A549 (cell line): ENCODE measurements at regions of chr1 and their contacts with region 1.

Region 1: GRCh38 chr1:39973503-39974135 is 18.7 kb downstream of the MFSD2A start:
- DNase-seq: peak; percentile 54 to 59
- ATAC-seq: peak; percentile 82 to 93
- H3K4me3 ChIP-seq: no peak overlapping the region
- H3K27ac ChIP-seq: no peak overlapping the region
- H3K4me1 ChIP-seq: peaks cover 5% of the 10 kb centered on the region; the same call in 1 of the 3 replicates
- CTCF ChIP-seq: peak; percentile 82
- EP300 ChIP-seq: no peak
- POLR2A ChIP-seq: no peak
- RAD21 ChIP-seq: peak; percentile 93

Region 2: DNA sequence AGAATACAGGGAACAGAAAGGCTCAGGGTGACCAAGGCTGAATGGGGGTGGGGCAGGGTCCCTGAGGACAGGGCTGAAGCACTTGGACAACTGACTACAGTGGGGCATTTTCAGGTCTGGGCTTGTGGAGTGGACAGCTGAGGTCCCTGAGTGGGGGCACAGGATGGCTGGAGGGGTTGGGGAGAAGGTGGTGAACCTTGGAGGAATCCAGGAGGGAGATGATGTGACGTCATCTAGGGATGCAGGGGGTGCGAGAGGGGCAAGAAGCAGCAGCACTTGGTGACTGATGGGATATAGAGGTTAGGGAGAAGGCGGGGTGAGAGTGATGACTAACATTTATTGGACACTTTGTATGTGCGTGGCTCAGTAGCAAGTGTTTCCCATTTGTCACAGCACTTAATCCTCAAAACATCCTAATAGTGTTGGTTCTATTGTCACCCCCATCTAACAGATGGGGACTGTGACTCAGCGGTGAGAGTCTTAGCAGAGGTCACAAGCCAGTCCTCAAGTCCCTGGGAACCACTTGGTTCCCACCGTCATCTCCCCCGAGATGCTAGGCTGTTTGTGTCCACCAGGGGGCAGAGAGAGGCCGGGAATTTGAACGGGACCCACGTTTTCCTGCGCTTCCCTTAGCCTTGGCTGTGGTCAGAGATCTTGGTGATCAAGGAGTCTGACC is 157.1 kb before region 1 on chr1:
- CTCF ChIA-PET with region 1: interaction called, 38 read pairs
- POLR2A ChIA-PET with region 1: no interaction called
- DNase-seq: peak; percentile 44 to 68
- ATAC-seq: peak; percentile 88 to 90
- H3K4me3 ChIP-seq: no peak overlapping the region
- H3K27ac ChIP-seq: no peak overlapping the region
- H3K4me1 ChIP-seq: 0 out of 3 replicates have a peak, but pooled peaks cover 9% of the 10 kb centered on the region
- CTCF ChIP-seq: peak; percentile 64
- EP300 ChIP-seq: no peak
- POLR2A ChIP-seq: no peak
- RAD21 ChIP-seq: peak; percentile 64 to 71

Region 3: GRCh38 chr1:39907528-39908453 is 65.8 kb before region 1 on chr1:
- CTCF ChIA-PET with region 1: interaction called, 19 read pairs
- POLR2A ChIA-PET with region 1: no interaction called
- DNase-seq: no peak
- ATAC-seq: no peak
- H3K4me3 ChIP-seq: no peak overlapping the region
- H3K27ac ChIP-seq: no peak overlapping the region
- H3K4me1 ChIP-seq: no peaks in the 10 kb centered on the region
- CTCF ChIP-seq: no peak
- EP300 ChIP-seq: no peak
- POLR2A ChIP-seq: no peak
- RAD21 ChIP-seq: no peak

Region 4: DNA sequence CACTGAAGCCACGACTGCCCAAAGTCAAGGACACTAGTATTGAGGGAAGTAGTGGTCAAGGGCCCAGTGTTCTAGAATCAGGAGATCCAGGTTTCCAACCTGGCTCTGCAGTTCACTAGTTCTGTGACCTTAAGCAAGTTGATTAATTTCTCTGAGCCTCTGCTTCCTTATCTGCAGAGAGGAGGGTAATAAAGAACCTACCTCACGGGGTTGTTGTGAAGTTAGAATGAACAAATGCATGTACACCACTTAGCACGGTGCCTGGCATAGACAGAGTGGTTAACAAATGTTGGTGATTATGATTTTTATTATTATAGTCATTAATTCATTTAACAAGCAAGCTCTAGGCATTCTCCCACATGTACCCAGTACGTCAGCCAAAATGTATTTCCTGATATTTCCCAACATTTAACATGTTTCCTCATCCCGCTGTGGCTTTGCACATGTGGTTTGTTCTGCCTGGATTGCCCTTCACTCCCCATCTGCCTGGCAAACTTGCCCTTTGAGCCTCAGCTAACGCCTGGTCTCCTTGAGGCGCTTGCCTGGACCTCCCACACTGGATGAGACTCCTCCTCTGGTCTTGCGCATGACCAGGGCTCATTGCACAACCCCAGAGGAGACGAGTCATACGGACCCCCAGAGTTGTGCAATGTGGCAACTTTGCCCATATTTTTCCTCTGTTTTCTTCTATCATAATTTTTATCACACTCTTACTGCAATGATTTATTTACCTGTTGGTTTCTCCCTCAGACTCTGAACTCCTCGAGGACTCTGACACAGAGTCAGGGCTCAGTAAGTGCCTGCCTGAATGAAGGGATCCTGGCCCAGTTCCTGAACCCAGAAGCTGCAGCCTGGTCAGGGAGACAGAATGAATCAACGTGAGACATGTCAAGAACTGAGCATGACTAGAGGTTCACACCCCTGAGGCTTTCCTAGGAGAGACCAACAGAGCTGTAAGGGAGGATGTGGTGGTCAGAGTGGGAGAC is 39.4 kb before region 1 on chr1:
- CTCF ChIA-PET with region 1: interaction called, 23 read pairs
- POLR2A ChIA-PET with region 1: no interaction called
- DNase-seq: peak; percentile 48 to 83
- ATAC-seq: peak; percentile 96 to 97
- H3K4me3 ChIP-seq: no peak overlapping the region
- H3K27ac ChIP-seq: peak overlapping the region; percentile 76 to 88
- H3K4me1 ChIP-seq: peaks cover 20% of the 10 kb centered on the region
- CTCF ChIP-seq: no peak
- EP300 ChIP-seq: peak; percentile 52 to 64; a peak in 3 of 5 replicates
- POLR2A ChIP-seq: no peak
- RAD21 ChIP-seq: no peak

Region 5: GRCh38 chr1:40032240-40032891 is 58.7 kb after region 1 on chr1:
- CTCF ChIA-PET with region 1: interaction called, 15 read pairs
- POLR2A ChIA-PET with region 1: no interaction called
- DNase-seq: peak; percentile 40 to 57
- ATAC-seq: peak; percentile 73 to 85; a peak in 4 of 6 replicates
- H3K4me3 ChIP-seq: no peak overlapping the region
- H3K27ac ChIP-seq: no peak overlapping the region
- H3K4me1 ChIP-seq: no peaks in the 10 kb centered on the region
- CTCF ChIP-seq: peak; percentile 67
- EP300 ChIP-seq: no peak
- POLR2A ChIP-seq: no peak
- RAD21 ChIP-seq: peak; percentile 52 to 58